ENCODE measurements at regions of chr13 and their contacts with region 1.

Region 1: DNA sequence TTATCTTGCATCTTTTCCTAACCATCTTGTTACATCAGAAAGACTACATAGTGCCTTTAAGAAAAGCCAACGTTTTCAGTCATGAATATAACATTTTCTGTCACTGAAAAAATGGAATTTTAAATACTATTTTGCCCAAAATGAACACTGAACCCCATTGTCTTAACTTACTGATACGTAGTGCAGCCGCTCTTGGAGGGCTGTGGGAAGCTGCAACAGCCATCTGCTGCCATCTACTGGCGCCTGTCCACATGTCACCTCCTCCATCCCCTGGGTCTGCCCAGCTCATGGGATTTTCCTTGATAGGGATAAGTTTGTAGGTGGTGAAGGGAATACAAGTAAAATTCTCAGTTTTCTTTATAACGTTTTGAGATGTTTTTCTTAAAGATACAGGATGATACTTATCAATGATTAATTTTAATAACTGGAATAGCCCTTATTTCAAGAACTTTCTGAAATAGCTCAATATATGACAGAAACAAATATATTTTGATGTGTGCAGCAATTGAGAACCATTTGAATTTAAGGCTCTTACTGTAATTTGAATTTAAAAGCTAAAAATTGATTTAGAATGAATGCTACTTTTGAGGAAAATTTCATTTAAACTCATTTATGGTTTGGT is 73.7 kb downstream of the GGACT start:
- DNase-seq: peak; percentile 79 to 93 (median 89)
- ATAC-seq: peak; percentile 92 to 95
- H3K4me3 ChIP-seq: no peak overlapping the region
- H3K27ac ChIP-seq: no peak overlapping the region
- H3K4me1 ChIP-seq: no peaks in the 10 kb centered on the region
- H3K27me3 ChIP-seq: no peaks in the 10 kb centered on the region

Region 2: GRCh38 chr13:99656092-99656745 is 858.7 kb before region 1 on chr13:
- intact Hi-C with region 1: loop called (anchors 5 to 10 kb)
- DNase-seq: peak; percentile 73 to 85 (median 78)
- ATAC-seq: peak; percentile 72 to 74
- H3K4me3 ChIP-seq: no peak overlapping the region
- H3K27ac ChIP-seq: no peak overlapping the region
- H3K4me1 ChIP-seq: no peaks in the 10 kb centered on the region
- H3K27me3 ChIP-seq: no peaks in the 10 kb centered on the region

Region 3: GRCh38 chr13:99916366-99917103 is 598.4 kb before region 1 on chr13:
- intact Hi-C with region 1: loop called in 2 of 4 experiments (anchors 2 to 5 kb)
- DNase-seq: no peak
- ATAC-seq: peak; percentile 74 to 77
- H3K4me3 ChIP-seq: no peak overlapping the region
- H3K27ac ChIP-seq: no peak overlapping the region
- H3K4me1 ChIP-seq: no peaks in the 10 kb centered on the region
- H3K27me3 ChIP-seq: no peaks in the 10 kb centered on the region

Region 4: DNA sequence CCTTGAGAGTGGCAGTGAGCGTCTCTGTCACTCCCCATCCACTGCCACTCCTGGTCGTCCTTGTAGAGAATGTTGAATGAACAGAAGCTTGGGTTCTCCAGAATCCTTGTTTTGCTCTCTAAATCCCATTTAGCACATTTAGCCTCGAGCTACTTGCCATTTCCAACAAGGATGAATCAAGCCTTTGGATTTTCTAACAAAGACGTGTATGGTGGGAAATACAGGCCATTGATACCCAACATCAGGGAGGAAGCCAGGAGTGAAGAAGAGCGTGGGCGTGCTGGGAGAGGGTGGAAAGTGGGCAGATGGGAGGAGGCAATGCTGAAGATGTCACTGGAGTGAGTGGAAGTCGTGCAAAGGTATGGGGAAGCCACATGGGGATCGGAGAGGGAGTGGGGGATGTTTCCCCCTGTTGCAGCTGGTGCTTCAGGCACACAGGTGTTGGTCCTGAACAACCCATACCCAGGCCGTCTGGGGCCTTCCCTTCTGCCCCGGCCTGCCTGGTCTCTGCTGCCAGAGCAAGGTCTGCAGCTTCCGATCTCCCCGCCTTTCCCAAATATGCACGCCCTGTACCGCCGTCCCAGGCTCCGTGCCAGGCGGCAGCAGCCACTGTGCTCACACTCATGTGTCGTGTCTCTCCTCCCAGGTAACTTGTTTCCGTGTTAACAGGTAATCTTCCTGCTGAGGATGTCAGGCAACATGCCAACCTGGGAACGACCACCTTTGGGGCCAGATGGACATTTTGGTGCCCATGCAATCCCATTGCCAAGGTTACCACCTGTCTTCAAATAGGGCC is 592.1 kb before region 1 on chr13:
- intact Hi-C with region 1: loop called in 1 of 4 experiments (anchors 5 kb)
- DNase-seq: no peak
- ATAC-seq: no peak
- H3K4me3 ChIP-seq: no peak overlapping the region
- H3K27ac ChIP-seq: no peak overlapping the region
- H3K4me1 ChIP-seq: no peaks in the 10 kb centered on the region
- H3K27me3 ChIP-seq: no peaks in the 10 kb centered on the region

Region 5: GRCh38 chr13:100244431-100244830 is 270.5 kb before region 1 on chr13:
- intact Hi-C with region 1: loop called in 1 of 4 experiments (anchors 10 kb)
- DNase-seq: no peak
- ATAC-seq: peak in 1 of 2 donors; percentile 46
- H3K4me3 ChIP-seq: no peak overlapping the region
- H3K27ac ChIP-seq: no peak overlapping the region
- H3K4me1 ChIP-seq: no peaks in the 10 kb centered on the region
- H3K27me3 ChIP-seq: no peaks in the 10 kb centered on the region

Region 6: GRCh38 chr13:100608906-100609305 is 94.0 kb after region 1 on chr13:
- intact Hi-C with region 1: no loop called
- DNase-seq: no peak
- ATAC-seq: peak; percentile 47 to 74
- H3K4me3 ChIP-seq: no peak overlapping the region
- H3K27ac ChIP-seq: no peak overlapping the region
- H3K4me1 ChIP-seq: no peaks in the 10 kb centered on the region
- H3K27me3 ChIP-seq: no peaks in the 10 kb centered on the region